Dorsolateral prefrontal cortex (tissue), 120 donors: ENCODE measurements at regions of chr1 and their contacts with region 1.

Region 1: DNA sequence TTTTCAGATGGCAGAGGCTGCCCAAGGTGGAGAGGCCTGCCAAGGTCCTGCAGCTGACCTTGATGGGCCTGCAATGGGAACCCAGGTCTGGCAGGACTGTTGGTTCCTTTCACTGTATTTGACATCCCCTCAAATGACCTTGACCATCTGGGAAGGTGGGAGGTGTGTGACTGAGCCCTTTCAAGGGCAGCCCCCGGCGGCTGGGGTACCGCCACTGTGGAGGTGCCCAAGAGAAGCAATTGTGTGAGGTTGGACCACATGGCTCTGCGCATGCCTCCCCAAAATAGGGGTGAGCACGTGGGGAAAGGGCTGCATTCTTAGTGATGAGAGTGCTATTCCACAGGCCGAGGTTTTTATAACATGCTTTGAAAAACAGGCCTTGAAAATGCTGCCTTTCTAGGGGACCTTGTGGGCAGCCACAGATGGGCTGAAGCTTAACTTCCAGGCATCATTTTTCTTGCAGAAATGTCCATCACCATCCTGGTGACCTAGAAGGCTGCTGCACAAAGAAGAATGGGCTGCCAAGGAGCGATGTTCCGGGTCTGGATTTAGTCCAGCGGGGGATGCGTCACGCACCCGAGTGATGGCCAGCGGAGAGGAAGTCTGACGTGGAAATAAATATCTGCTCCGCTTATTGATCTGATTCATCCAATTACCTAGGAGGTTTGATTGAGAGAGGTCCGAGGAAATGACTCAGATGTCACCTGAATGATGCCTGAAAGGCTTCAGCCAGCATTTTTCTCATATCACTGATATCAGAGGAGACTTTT is 16.5 kb upstream of the UTS2 start:
- DNase-seq: no peak
- H3K4me3 ChIP-seq: no peak overlapping the region
- H3K27ac ChIP-seq: no peak overlapping the region
- H3K27me3 ChIP-seq: no peaks in the 10 kb centered on the region
- CTCF ChIP-seq: no peak

Region 2: DNA sequence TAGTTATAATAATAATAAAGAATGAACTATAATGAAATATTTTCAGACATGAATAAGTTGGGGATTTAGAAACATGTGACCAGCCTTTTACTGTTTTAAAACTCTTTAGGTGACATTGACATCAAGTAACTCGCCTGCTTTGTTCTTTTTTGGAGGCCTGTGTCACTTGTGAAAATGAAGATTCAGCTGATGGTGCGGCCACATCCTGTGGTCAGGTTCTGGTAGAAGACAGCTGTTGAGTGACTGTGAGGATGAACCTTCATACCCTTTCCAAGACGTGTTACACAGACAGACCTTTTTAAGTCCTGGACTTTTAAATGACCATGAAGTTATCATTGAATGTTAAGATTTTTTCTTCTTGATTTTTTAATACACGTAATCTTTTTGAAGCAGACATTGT is 26.8 kb before region 1 on chr1:
- intact Hi-C with region 1: loop called in 1 of 2 experiments (anchors 1 kb)
- DNase-seq: no peak
- H3K4me3 ChIP-seq: no peak overlapping the region
- H3K27ac ChIP-seq: no peak overlapping the region
- H3K27me3 ChIP-seq: no peaks in the 10 kb centered on the region
- CTCF ChIP-seq: no peak

Region 3: DNA sequence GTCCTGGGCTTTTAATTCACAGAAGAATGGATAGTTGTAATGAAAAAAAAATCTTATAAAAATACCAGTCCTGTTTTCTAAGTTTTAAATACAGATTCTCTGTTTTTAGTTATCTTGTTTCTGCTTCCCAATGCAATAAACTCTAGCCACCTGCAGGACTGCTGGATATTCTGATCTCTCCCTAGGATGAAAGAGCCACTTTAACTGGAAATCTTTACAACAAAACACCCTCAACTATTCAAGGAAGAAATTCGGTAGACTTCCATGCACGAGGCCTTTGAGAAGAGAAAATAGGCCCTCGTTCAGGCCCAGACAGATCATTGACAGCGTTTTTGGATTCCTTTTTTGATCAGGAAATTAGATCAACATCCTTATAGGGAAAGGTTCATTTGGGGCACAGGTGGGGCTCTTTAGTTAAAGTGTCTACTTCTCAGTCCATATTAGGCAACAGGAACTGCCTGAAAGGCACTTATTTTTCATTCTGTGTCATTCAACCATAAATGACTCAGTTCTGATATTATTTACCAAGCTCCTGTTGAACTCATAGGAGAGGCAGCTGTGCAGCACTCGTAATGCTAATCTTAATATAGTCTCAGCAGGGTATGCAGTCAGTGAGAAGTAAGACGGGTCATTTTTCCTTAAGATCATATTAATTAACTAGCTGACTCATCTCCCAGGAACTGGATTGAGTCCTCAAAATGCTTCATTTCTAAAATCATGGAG is 227.9 kb after region 1 on chr1:
- intact Hi-C with region 1: no loop called
- DNase-seq: no peak
- H3K4me3 ChIP-seq: no peak overlapping the region
- H3K27ac ChIP-seq: peak overlapping the region in 5 of 59 donors; percentile 28 to 67 (median 51)
- H3K27me3 ChIP-seq: no peaks in the 10 kb centered on the region
- CTCF ChIP-seq: no peak